ENCODE measurements at regions of chr2 and their contacts with region 1.

Region 1: GRCh38 chr2:197130318-197130717 is 180.3 kb downstream of the ANKRD44 start:
- DNase-seq: peak; percentile 79
- H3K4me3 ChIP-seq: peak overlapping the region; percentile 60
- H3K27ac ChIP-seq: peak overlapping the region; percentile 96
- H3K4me1 ChIP-seq: peaks cover 54% of the 10 kb centered on the region
- CTCF ChIP-seq: no peak

Region 2: GRCh38 chr2:197145471-197146138 is 15.3 kb after region 1 on chr2:
- CTCF ChIA-PET with region 1: interaction called, 4 read pairs
- POLR2A ChIA-PET with region 1: interaction called, 45 read pairs
- intact Hi-C with region 1: loop called (anchors 2 kb)
- DNase-seq: peak; percentile 94
- H3K4me3 ChIP-seq: peak overlapping the region; percentile 37
- H3K27ac ChIP-seq: peak overlapping the region; percentile 100
- H3K4me1 ChIP-seq: peaks cover 93% of the 10 kb centered on the region
- CTCF ChIP-seq: no peak

Region 3: DNA sequence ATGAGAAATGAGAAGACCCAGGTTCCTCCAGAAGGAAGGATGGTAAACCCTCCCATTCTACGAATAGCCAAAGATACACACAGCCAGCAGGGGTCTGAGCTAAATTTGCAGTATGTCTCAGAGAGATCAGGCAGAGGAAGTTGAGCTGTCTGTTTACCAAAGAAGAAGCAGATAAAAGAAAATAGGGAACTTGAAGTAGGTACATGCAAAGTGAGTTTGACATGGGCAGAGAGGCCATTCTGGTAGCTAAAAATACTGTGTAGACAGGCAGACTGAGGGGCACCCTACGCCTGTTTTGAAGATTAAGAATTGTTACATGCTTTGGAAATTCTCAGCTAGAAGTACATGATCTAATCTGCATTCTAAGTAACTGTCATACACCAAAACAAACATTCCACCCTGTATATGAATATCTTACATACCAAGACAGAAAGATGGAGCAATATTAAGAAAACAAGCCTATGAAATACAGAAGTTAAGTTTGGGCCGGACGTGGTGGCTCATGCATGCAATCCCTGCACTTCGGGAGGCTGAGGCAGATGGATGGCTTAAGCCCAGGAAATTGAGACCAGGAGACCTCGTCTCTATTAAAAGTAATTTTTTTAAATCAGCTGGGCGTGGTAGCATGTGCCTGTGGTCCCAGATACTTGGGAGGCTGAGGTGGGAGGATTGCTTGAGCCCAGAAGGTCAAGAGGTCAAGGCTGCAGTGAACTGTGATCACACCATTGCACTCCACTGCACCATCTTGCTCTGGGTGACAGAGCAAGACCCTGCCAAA is 22.3 kb after region 1 on chr2:
- CTCF ChIA-PET with region 1: no interaction called
- POLR2A ChIA-PET with region 1: interaction called, 20 read pairs
- intact Hi-C with region 1: loop called (anchors 1 kb)
- DNase-seq: peak; percentile 94
- H3K4me3 ChIP-seq: peak overlapping the region; percentile 56
- H3K27ac ChIP-seq: peak overlapping the region; percentile 99
- H3K4me1 ChIP-seq: peaks cover 81% of the 10 kb centered on the region
- CTCF ChIP-seq: peak; percentile 64

Region 4: GRCh38 chr2:197159661-197160211 is 29.4 kb after region 1 on chr2:
- CTCF ChIA-PET with region 1: no interaction called
- POLR2A ChIA-PET with region 1: interaction called, 20 read pairs
- intact Hi-C with region 1: no loop called
- DNase-seq: no peak
- H3K4me3 ChIP-seq: no peak overlapping the region
- H3K27ac ChIP-seq: peak overlapping the region; percentile 67
- H3K4me1 ChIP-seq: peaks cover 62% of the 10 kb centered on the region
- CTCF ChIP-seq: no peak

Measured in OCI-LY7 (cell line).